ENCODE measurements at regions of chr1 and their contacts with region 1.

Region 1: DNA sequence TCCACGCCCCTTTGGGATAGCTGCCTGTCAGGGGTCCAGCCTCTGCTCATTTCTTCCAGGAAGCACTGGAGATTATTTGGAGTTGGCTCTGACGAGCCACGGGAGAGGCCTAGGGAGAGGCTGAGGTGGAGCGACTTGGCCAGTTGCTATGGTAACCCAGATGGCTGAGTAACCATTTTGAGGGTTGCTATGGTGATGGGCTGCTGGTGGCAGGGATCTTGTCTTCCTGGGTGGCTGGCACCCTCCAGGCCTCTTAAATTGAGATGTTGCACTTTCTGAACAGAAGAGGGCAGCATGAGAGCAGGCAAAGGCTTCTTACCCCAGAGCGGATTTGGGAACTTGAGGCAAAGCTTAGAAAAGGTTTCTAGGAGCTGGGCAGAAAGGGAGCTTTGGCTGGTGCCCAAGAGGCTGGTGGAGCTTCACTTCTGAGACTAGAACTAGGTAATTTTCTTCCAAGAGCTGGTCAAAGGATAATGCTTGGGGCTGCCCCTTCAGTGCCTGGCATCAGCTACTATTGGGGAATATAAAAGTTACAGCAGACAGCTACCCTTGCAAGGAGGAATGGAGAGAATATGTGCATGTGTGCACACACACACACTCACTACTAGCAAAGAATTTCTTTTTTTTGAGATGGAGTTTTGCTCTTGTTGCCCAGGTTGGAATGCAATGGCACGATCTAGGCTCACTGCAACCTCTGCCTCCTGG is 72.5 kb downstream of the NDUFS5 start:
- DNase-seq: no peak
- H3K4me3 ChIP-seq: no peak overlapping the region
- H3K27ac ChIP-seq: no peak overlapping the region
- H3K4me1 ChIP-seq: peaks cover 18 to 30% (median 23%) of the 10 kb centered on the region in 4 donors
- H3K27me3 ChIP-seq: no peaks in the 10 kb centered on the region
- CTCF ChIP-seq: peak; percentile 62 to 85 (median 82)
- EP300 ChIP-seq: no peak
- POLR2A ChIP-seq: no peak

Region 2: DNA sequence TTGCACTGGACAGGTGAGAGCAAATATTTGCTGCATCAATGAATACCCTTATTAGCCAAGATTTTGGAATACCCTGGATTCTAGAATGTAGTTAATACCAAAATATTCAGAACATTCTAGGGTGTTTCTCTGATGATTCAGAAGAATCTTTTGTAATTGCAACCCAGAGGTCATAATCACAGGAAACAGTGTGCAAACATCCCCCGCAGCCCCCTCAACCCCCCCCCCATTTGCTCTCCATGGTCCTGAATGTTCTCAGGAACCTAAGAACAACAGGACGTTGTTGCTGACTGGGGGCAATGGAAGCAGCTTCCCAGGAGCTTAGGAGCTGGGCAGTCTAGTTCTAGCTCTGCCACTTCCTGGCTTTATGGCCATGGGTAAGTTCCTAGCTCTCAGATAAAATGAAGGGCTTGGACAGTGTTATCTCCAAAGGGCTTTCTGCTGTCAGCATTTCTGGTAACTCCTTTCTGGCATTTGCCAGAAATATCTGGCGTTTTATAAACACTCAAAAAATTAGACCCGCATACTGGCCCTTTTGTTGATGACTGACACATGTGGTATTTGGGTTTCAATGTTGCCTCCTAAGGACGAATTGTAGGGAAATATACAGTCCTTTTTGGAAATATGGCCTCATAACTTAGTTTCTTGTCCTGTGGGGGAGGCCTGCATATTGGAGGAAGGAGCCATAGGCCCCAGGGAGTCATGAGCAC is 417.7 kb before region 1 on chr1:
- intact Hi-C with region 1: no loop called
- DNase-seq: peak; percentile 55
- H3K4me3 ChIP-seq: no peak overlapping the region
- H3K27ac ChIP-seq: no peak overlapping the region
- H3K4me1 ChIP-seq: no peaks in the 10 kb centered on the region
- H3K27me3 ChIP-seq: peaks cover 0 to 15% (median 0%) of the 10 kb centered on the region in 4 donors
- CTCF ChIP-seq: no peak
- EP300 ChIP-seq: no peak
- POLR2A ChIP-seq: no peak

Region 3: DNA sequence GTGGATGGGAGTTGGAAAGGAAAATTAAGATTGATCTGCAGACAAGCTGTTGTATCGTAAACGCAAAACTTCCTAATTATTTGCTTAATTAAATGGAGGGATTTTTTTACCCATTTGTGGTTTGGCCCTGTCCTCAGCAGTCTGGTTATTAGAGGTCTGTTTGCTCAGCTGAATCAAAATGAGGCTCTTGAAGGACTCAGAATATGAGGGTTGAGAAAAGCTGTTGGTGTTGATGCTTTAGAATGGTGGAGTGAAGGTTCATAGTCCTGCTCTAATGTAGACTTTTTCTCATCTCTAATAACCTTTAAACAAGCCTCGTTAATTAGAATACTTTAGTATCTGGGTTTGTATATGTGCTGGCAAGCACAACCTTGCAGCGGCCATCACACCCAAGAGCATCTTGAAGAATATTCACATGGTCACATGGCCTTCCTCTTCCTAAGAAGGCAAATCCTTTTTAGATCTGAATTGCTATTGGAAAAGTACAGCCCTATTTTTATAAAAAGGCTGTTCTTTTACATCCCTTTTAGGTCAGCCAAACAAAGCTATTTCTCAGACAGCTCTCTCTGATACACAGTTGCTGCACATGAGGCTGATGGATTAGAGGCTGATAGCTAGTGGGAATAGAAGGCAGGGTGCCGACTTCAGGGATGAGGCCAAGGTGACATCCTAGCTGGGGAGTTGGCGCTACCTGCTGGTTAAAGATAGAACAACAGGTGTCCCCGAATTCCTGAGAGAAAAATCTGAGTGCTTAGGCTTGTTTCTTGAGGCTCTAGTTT is 159.6 kb after region 1 on chr1:
- intact Hi-C with region 1: loop called (anchors 2 kb)
- DNase-seq: peak; percentile 96
- H3K4me3 ChIP-seq: no peak overlapping the region
- H3K27ac ChIP-seq: peak overlapping the region; percentile 59 to 74 (median 70)
- H3K4me1 ChIP-seq: peaks cover 30 to 59% (median 57%) of the 10 kb centered on the region in 4 donors
- H3K27me3 ChIP-seq: no peaks in the 10 kb centered on the region
- CTCF ChIP-seq: peak; percentile 89 to 91 (median 89)
- EP300 ChIP-seq: no peak
- POLR2A ChIP-seq: no peak

Region 4: GRCh38 chr1:39332291-39332690 is 233.6 kb after region 1 on chr1:
- intact Hi-C with region 1: loop called (anchors 10 kb)
- DNase-seq: no peak
- H3K4me3 ChIP-seq: no peak overlapping the region
- H3K27ac ChIP-seq: peak overlapping the region in 1 of 4 donors; percentile 16
- H3K4me1 ChIP-seq: peaks cover 0 to 49% (median 40%) of the 10 kb centered on the region in 4 donors
- H3K27me3 ChIP-seq: no peaks in the 10 kb centered on the region
- CTCF ChIP-seq: no peak
- EP300 ChIP-seq: no peak
- POLR2A ChIP-seq: no peak

Region 5: GRCh38 chr1:39538588-39539465 is 440.1 kb after region 1 on chr1:
- intact Hi-C with region 1: loop called (anchors 2 kb)
- DNase-seq: peak; percentile 93
- H3K4me3 ChIP-seq: no peak overlapping the region
- H3K27ac ChIP-seq: peak overlapping the region in 1 of 4 donors; percentile 71
- H3K4me1 ChIP-seq: peaks cover 4 to 13% (median 10%) of the 10 kb centered on the region in 4 donors
- H3K27me3 ChIP-seq: no peaks in the 10 kb centered on the region
- CTCF ChIP-seq: peak; percentile 88 to 94 (median 89)
- EP300 ChIP-seq: no peak
- POLR2A ChIP-seq: no peak